Naive thymus-derived CD4-positive, alpha-beta T cell (primary cell): ENCODE measurements at regions of chr7 and their contacts with region 1.

Region 1: DNA sequence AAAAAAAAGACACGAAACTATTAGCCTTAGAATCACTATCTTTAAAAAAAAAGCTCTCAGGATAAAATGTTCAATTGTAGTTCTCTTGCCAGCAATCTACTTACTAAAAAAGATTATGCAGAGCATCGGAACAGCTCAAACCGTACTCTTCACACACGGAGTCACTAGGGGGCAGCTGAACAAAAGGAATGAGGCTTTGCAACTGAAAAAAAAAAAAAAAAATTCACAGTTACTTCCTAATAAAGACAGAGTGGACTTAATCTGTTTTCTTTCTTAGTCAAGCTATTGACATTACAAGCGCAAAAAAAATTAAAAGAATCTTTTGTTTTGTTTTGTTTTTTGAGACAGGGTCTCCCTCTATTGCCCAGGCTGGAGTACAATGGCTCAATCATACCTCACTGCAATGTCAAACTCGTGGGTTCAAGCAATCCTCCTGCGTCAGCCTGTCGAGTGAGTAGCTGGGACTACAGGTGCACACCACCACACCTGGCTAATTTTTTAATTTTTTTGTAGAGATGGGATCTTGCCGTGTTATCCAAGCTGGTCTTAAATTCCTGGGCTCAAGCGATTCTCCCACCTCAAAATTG is 11.5 kb downstream of the PMS2 start:
- DNase-seq: peak in 7 of 9 donors; percentile 32 to 69 (median 54)
- ATAC-seq: peak; percentile 82
- H3K4me3 ChIP-seq: no peak overlapping the region
- H3K4me3 Mint-ChIP-seq: no peak overlapping the region
- H3K27ac ChIP-seq: no peak overlapping the region
- H3K27ac Mint-ChIP-seq: peak overlapping the region in 4 of 9 donors; percentile 8 to 44 (median 40)
- H3K4me1 ChIP-seq: no peaks in the 10 kb centered on the region
- H3K4me1 Mint-ChIP-seq: peaks cover 0 to 4% (median 0%) of the 10 kb centered on the region in 7 donors
- H3K27me3 ChIP-seq: no peaks in the 10 kb centered on the region
- H3K27me3 Mint-ChIP-seq: no peaks in the 10 kb centered on the region

Region 2: GRCh38 chr7:6435486-6436384 is 438.4 kb after region 1 on chr7:
- CTCF ChIA-PET with region 1: no interaction called
- POLR2A ChIA-PET with region 1: no interaction called
- intact Hi-C with region 1: loop called in 1 of 2 experiments (anchors 1 kb)
- DNase-seq: peak; percentile 80 to 95 (median 89)
- ATAC-seq: peak; percentile 96
- H3K4me3 ChIP-seq: peak overlapping the region; percentile 34
- H3K4me3 Mint-ChIP-seq: peak overlapping the region; percentile 75 to 90 (median 84)
- H3K27ac ChIP-seq: peak overlapping the region; percentile 70
- H3K27ac Mint-ChIP-seq: peak overlapping the region; percentile 81 to 97 (median 91)
- H3K4me1 ChIP-seq: peaks cover 6 to 27% of the 10 kb centered on the region in 2 donors
- H3K4me1 Mint-ChIP-seq: peaks cover 29 to 59% (median 53%) of the 10 kb centered on the region in 7 donors
- H3K27me3 ChIP-seq: no peaks in the 10 kb centered on the region
- H3K27me3 Mint-ChIP-seq: no peaks in the 10 kb centered on the region